Activated CD4-positive, alpha-beta memory T cell treated with anti-CD3 and anti-CD28 coated beads for 36 hours (primary cell): ENCODE measurements at regions of chr18 and their contacts with region 1.

Region 1: GRCh38 chr18:54163453-54163852 is 61.0 kb downstream of the MBD2 start:
- DNase-seq: no peak
- H3K4me3 Mint-ChIP-seq: no peak overlapping the region
- H3K27ac Mint-ChIP-seq: peak overlapping the region; percentile 85
- H3K4me1 Mint-ChIP-seq: peaks cover 22% of the 10 kb centered on the region
- H3K27me3 Mint-ChIP-seq: no peaks in the 10 kb centered on the region

Region 2: DNA sequence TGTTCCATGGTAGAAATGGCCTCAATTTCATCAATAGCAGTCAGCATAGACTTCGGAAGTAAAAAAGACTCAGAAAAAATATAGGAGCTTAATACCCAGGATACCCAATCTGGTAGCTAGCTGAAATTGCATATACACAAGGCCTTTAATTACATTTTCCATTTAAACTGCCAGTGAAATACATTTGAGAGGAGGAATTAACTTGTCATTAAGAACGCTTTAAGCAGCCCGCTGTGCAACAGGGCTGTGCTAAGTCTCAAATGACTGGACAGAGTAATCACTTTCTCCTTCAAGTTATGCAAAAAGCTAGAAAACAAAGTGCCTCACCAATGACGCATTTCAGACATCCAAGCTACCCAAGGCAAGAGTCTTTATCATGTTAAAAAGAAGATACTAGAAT is 497.8 kb before region 1 on chr18:
- CTCF ChIA-PET with region 1: no interaction called
- POLR2A ChIA-PET with region 1: no interaction called
- intact Hi-C with region 1: no loop called
- DNase-seq: no peak
- H3K4me3 Mint-ChIP-seq: no peak overlapping the region
- H3K27ac Mint-ChIP-seq: no peak overlapping the region
- H3K4me1 Mint-ChIP-seq: no peaks in the 10 kb centered on the region
- H3K27me3 Mint-ChIP-seq: no peaks in the 10 kb centered on the region

Region 3: GRCh38 chr18:54109131-54109683 is 54.2 kb before region 1 on chr18:
- CTCF ChIA-PET with region 1: no interaction called
- POLR2A ChIA-PET with region 1: no interaction called
- intact Hi-C with region 1: no loop called
- DNase-seq: no peak
- H3K4me3 Mint-ChIP-seq: no peak overlapping the region
- H3K27ac Mint-ChIP-seq: no peak overlapping the region
- H3K4me1 Mint-ChIP-seq: no peaks in the 10 kb centered on the region
- H3K27me3 Mint-ChIP-seq: peaks cover 1% of the 10 kb centered on the region

Region 4: GRCh38 chr18:54127759-54128378 is 35.6 kb before region 1 on chr18:
- CTCF ChIA-PET with region 1: no interaction called
- POLR2A ChIA-PET with region 1: no interaction called
- intact Hi-C with region 1: loop called (anchors 1 kb)
- DNase-seq: peak; percentile 47
- H3K4me3 Mint-ChIP-seq: no peak overlapping the region
- H3K27ac Mint-ChIP-seq: no peak overlapping the region
- H3K4me1 Mint-ChIP-seq: peaks cover 15% of the 10 kb centered on the region
- H3K27me3 Mint-ChIP-seq: no peaks in the 10 kb centered on the region

Region 5: DNA sequence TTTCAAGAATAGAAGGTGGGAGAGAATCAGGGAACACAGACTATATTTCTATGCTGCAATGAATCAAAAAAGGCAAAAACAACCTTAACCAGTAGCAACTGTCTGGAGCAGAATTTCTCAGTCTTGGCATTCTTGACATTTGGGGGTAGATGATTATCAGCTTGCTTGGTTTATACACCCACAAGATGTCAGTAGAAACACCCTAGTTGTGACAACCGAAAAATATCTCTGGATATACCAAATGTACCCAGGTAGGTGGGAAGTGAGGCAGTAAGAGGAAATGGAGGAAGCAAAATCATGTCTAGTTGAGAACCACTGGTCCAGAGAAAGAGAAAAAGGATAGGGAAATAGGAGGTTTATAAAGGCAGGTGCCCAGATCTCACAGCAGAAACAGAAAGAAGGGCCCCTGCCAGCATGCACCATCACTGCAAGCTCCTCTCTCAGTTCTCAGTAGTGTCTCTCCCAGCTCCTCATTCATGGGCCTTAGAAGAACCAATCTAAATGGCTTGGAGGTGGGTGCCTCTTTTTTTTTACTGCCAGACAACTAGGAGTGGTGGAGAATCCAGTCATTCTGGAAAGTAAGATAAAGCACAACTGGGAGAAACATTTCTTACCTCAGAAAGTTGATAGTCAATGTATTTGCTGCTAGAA is 10.7 kb after region 1 on chr18:
- CTCF ChIA-PET with region 1: no interaction called
- POLR2A ChIA-PET with region 1: interaction called, 7 read pairs
- intact Hi-C with region 1: loop called (anchors 1 kb)
- DNase-seq: peak; percentile 26
- H3K4me3 Mint-ChIP-seq: no peak overlapping the region
- H3K27ac Mint-ChIP-seq: peak overlapping the region; percentile 79
- H3K4me1 Mint-ChIP-seq: peaks cover 47% of the 10 kb centered on the region
- H3K27me3 Mint-ChIP-seq: no peaks in the 10 kb centered on the region

Region 6: GRCh38 chr18:54191352-54191751 is 27.9 kb after region 1 on chr18:
- CTCF ChIA-PET with region 1: no interaction called
- POLR2A ChIA-PET with region 1: no interaction called
- intact Hi-C with region 1: no loop called
- DNase-seq: no peak
- H3K4me3 Mint-ChIP-seq: no peak overlapping the region
- H3K27ac Mint-ChIP-seq: no peak overlapping the region
- H3K4me1 Mint-ChIP-seq: peaks cover 2% of the 10 kb centered on the region
- H3K27me3 Mint-ChIP-seq: no peaks in the 10 kb centered on the region